MCF 10A (cell line): ENCODE measurements at regions of chr15 and their contacts with region 1.

Region 1: GRCh38 chr15:39934397-39935071 is 619 bp downstream of the EIF2AK4 start:
- DNase-seq: no peak
- H3K4me3 Mint-ChIP-seq: peak overlapping the region; percentile 90
- H3K27ac Mint-ChIP-seq: peak overlapping the region; percentile 89
- H3K4me1 Mint-ChIP-seq: peaks cover 28% of the 10 kb centered on the region
- H3K27me3 Mint-ChIP-seq: no peaks in the 10 kb centered on the region
- CTCF ChIP-seq: no peak

Region 2: GRCh38 chr15:39728845-39729244 is 205.7 kb before region 1 on chr15:
- CTCF ChIA-PET with region 1: no interaction called
- POLR2A ChIA-PET with region 1: no interaction called
- intact Hi-C with region 1: no loop called
- DNase-seq: no peak
- H3K4me3 Mint-ChIP-seq: no peak overlapping the region
- H3K27ac Mint-ChIP-seq: no peak overlapping the region
- H3K4me1 Mint-ChIP-seq: no peaks in the 10 kb centered on the region
- H3K27me3 Mint-ChIP-seq: no peaks in the 10 kb centered on the region
- CTCF ChIP-seq: no peak

Region 3: GRCh38 chr15:39788108-39788507 is 146.4 kb before region 1 on chr15:
- CTCF ChIA-PET with region 1: interaction called, 14 read pairs
- POLR2A ChIA-PET with region 1: interaction called, 22 read pairs
- intact Hi-C with region 1: loop called (anchors 2 kb)
- DNase-seq: peak; percentile 8
- H3K4me3 Mint-ChIP-seq: no peak overlapping the region
- H3K27ac Mint-ChIP-seq: no peak overlapping the region
- H3K4me1 Mint-ChIP-seq: peaks cover 15% of the 10 kb centered on the region
- H3K27me3 Mint-ChIP-seq: no peaks in the 10 kb centered on the region
- CTCF ChIP-seq: no peak

Region 4: DNA sequence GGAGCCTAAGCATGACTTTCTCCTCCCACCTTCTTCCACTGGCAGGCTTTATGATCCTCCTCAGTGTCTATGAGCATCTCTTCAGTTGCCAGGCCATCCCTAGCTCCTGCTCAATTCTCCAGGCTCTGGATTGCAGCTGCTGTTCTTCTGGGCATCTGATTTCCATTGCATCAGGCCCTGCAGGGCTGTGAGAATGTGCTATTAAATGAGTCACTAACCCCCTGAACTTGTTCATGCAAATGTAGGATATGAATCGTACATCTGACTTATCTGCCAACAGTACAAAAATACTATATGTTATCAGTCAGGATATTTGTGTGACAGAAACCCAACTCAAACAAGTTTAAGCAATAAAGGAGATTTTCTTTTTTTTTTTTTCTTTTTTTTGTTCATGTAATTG is 26.3 kb before region 1 on chr15:
- CTCF ChIA-PET with region 1: interaction called, 6 read pairs
- POLR2A ChIA-PET with region 1: interaction called, 12 read pairs
- intact Hi-C with region 1: no loop called
- DNase-seq: peak; percentile 74
- H3K4me3 Mint-ChIP-seq: no peak overlapping the region
- H3K27ac Mint-ChIP-seq: no peak overlapping the region
- H3K4me1 Mint-ChIP-seq: peaks cover 11% of the 10 kb centered on the region
- H3K27me3 Mint-ChIP-seq: no peaks in the 10 kb centered on the region
- CTCF ChIP-seq: no peak

Region 5: DNA sequence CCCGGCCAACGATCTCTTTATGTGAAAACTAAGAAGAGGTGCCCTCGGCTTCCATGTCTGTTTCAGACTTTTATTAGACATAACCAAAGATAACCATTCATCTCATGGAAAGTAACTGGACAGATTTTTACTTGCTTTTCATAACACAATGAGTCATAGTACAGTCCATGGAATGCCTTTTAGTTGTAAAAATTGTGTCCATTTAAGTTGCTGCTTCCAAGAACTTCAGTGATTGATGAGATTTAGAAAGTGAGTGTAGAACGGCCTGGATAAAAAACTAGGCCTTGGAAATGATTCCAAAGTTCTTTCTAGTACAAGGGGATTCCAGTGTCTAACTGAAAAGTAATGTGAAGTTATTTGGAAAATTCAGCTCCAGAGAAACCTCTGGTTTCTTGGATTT is 10.2 kb after region 1 on chr15:
- CTCF ChIA-PET with region 1: interaction called, 5 read pairs
- POLR2A ChIA-PET with region 1: interaction called, 19 read pairs
- intact Hi-C with region 1: no loop called
- DNase-seq: no peak
- H3K4me3 Mint-ChIP-seq: no peak overlapping the region
- H3K27ac Mint-ChIP-seq: no peak overlapping the region
- H3K4me1 Mint-ChIP-seq: no peaks in the 10 kb centered on the region
- H3K27me3 Mint-ChIP-seq: no peaks in the 10 kb centered on the region
- CTCF ChIP-seq: no peak